Endothelial cell of umbilical vein (primary cell): ENCODE measurements at regions of chr16 and their contacts with region 1.

Region 1: GRCh38 chr16:20383106-20384029 is 21.2 kb downstream of the PDILT start:
- DNase-seq: peak; percentile 73
- H3K4me3 ChIP-seq: no peak overlapping the region
- H3K27ac ChIP-seq: no peak overlapping the region
- H3K4me1 ChIP-seq: no peaks in the 10 kb centered on the region
- H3K27me3 ChIP-seq: no peaks in the 10 kb centered on the region
- CTCF ChIP-seq: peak; percentile 60 to 78
- POLR2A ChIP-seq: no peak

Region 2: DNA sequence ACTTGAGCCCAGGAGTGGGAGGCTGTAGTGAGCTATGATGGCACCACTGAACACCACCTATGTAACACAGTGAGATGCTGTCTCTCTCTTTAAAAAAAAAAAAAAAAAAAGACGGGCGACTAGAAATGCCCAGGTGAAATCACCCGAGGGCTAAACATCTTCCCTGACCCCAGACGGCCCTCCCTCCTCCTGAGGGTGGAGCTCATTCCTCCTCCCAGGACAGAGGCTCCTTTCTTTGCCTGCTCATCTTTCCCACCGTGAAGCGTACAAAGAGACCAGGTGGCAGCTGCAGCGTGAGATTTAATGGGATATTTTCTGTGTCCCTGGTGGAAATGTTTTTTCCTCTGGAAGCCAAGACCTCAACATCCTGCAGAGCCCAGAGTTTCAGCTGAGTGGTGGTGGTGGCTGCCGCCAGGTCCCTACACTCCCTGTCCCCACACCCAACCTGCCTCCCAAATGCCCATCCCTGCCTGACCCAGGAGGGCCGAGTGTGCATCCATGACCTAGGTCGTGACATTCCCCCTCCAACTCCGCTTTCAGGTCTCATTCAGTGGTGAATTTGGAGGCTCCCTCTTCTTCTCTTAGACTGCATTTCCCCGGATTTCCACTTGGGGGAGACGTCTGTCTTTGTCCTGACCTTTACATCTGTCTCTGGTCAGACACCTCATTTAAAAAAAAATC is 484.3 kb before region 1 on chr16:
- CTCF ChIA-PET with region 1: interaction called, 438 read pairs
- POLR2A ChIA-PET with region 1: no interaction called
- dilution Hi-C with region 1: no loop called
- intact Hi-C with region 1: no loop called
- DNase-seq: peak; percentile 55
- H3K4me3 ChIP-seq: no peak overlapping the region
- H3K27ac ChIP-seq: no peak overlapping the region
- H3K4me1 ChIP-seq: no peaks in the 10 kb centered on the region
- H3K27me3 ChIP-seq: no peaks in the 10 kb centered on the region
- CTCF ChIP-seq: peak; percentile 62 to 69
- POLR2A ChIP-seq: no peak

Region 3: GRCh38 chr16:20372701-20373100 is 10.7 kb before region 1 on chr16:
- CTCF ChIA-PET with region 1: interaction called, 23 read pairs
- POLR2A ChIA-PET with region 1: no interaction called
- dilution Hi-C with region 1: no loop called
- intact Hi-C with region 1: no loop called
- DNase-seq: no peak
- H3K4me3 ChIP-seq: no peak overlapping the region
- H3K27ac ChIP-seq: no peak overlapping the region
- H3K4me1 ChIP-seq: no peaks in the 10 kb centered on the region
- H3K27me3 ChIP-seq: no peaks in the 10 kb centered on the region
- CTCF ChIP-seq: no peak
- POLR2A ChIP-seq: no peak

Region 4: GRCh38 chr16:20441191-20441590 is 57.8 kb after region 1 on chr16:
- CTCF ChIA-PET with region 1: no interaction called
- POLR2A ChIA-PET with region 1: no interaction called
- dilution Hi-C with region 1: no loop called
- intact Hi-C with region 1: no loop called
- DNase-seq: no peak
- H3K4me3 ChIP-seq: no peak overlapping the region
- H3K27ac ChIP-seq: no peak overlapping the region
- H3K4me1 ChIP-seq: no peaks in the 10 kb centered on the region
- H3K27me3 ChIP-seq: no peaks in the 10 kb centered on the region
- CTCF ChIP-seq: no peak
- POLR2A ChIP-seq: no peak